A549 (cell line): ENCODE measurements at regions of chr17 and their contacts with region 1.

Region 1: DNA sequence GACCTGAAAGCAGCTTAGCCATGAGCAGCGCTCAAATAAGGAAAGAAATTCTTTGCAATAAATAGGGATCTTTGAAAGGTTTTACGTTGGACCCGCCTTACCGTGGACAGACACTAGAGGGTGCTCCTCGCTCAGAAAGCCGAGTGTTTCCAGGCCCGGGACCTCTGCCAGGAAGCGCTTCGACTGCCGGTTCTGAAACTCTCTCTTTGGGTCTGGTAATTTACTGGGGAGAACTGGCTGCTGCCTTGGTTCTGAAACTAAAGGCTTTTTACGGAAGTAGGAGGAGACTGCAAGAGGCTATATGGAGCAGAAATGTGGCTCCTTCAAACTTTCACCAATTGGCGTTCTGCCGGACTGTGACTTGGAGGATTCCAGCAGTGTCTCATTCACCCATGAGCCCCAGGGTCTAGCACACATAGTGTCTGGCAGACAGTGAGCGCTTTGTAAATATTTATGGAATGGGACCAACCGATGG is 45.6 kb upstream of the HOXB9 start:
- DNase-seq: peak; percentile 72 to 79
- ATAC-seq: peak; percentile 81 to 86
- H3K4me3 ChIP-seq: peak overlapping the region; percentile 10; the same call in 2 of the 3 replicates
- H3K27ac ChIP-seq: peak overlapping the region; percentile 29 to 69
- H3K4me1 ChIP-seq: peaks cover 3% of the 10 kb centered on the region; the same call in 1 of the 3 replicates
- CTCF ChIP-seq: peak; percentile 91
- EP300 ChIP-seq: no peak
- POLR2A ChIP-seq: no peak
- RAD21 ChIP-seq: peak; percentile 90 to 93

Region 2: GRCh38 chr17:48500966-48501426 is 170.7 kb before region 1 on chr17:
- CTCF ChIA-PET with region 1: no interaction called
- POLR2A ChIA-PET with region 1: no interaction called
- DNase-seq: peak in 1 of 2 experiments; percentile 53
- ATAC-seq: peak; percentile 40 to 76; a peak in 4 of 6 replicates
- H3K4me3 ChIP-seq: no peak overlapping the region
- H3K27ac ChIP-seq: 0 out of 6 replicates have a peak overlapping the region, but pooled peaks of 1 of the 2 experiments have one; percentile 2
- H3K4me1 ChIP-seq: peaks cover 25% of the 10 kb centered on the region
- CTCF ChIP-seq: no peak; the same call in 2 of the 3 replicates
- EP300 ChIP-seq: no peak
- POLR2A ChIP-seq: no peak
- RAD21 ChIP-seq: peak; percentile 32 to 53; a peak in 3 of 5 replicates

Region 3: DNA sequence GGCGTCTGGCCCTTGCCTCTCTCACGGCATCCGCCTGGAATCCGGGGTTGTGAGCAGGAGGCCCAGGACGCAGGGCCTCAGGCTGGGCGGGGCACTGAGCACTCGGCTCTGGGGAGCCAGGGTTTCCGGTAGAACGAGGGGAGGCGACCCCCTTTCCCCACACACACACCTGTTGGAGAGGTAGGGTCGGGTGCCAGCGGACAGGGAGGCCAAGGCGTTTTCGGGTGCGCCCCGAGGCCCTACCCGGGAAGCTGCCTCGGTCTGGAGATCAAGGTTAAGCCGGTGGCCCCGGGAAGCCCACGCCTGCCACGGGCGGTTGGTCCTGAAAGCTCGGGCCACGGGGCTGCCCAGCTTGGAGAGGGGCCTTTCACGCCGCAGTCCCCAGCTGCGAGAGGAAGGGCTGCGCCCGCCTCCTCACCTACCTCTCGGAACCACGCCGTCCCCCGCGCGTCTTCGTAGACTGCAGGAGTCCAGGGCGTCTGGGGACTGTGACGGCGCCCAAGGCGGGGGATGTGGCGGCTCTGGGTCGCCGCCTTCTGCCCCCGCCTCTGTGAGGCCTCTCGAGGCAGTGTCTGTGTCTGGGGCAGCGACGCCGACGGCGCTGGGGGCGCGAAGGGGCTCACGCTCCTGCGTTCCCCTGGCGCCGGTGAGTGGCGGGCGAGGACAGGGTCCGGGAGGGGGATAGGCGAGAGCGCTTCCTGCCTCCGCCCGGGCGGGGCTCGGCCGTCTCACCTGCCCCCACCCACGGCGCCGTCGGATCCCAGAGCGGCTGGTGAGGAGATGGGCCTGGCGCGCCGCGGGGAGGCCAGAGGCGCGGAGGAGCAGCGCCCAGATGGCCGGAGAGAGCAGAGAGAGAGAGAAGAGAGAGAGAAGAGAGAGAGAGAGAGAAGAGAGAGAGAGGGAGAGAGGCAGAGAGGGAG is 25.3 kb before region 1 on chr17:
- CTCF ChIA-PET with region 1: interaction called, 17 read pairs
- POLR2A ChIA-PET with region 1: no interaction called
- DNase-seq: peak; percentile 64 to 80
- ATAC-seq: peak; percentile 76 to 79
- H3K4me3 ChIP-seq: peak overlapping the region; percentile 74
- H3K27ac ChIP-seq: peak overlapping the region; percentile 92 to 95
- H3K4me1 ChIP-seq: peaks cover 34% of the 10 kb centered on the region
- CTCF ChIP-seq: no peak
- EP300 ChIP-seq: no peak
- POLR2A ChIP-seq: peak; percentile 35
- RAD21 ChIP-seq: no peak

Region 4: DNA sequence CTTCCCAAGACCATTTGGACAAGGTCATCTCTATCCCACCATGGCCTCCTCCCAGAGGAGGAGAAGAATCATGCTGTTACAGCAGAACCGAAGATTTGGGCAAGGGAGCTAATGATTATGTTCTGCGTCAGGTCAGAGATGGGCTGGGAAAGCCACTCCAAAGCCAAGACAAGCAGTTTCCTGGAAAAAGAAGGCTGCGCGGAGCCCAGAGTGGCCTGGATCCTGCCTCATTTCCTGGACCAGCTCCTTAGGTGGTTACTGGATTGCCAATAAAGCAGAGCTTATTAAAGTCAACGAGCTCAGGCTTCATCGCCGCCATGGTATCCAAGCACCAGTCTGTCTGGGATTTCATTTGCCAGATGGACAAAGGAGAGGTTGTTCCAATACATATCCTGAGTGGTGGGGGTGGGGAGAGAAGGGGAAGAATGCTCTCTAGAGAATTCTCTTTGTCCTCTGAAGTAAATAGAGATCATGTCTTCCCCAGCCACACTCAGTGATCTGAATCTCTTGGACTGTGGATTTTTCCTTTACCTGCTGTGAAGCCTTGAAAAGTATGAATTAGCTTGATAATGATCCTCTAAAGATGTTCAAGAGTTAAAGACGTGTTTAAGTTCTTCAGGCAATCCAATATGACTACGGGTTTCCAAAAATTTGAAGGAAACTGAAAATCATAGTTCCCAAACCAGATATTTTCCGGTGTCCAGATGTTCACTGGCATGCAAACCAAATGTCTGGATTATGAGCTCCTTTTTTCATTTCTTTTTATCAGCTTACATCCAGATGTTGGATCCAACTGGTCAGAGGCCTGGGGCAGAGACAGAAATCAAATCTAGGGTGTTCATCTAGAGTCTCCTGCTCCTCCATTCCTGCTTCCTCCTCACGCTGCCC is 32.9 kb after region 1 on chr17:
- CTCF ChIA-PET with region 1: interaction called, 70 read pairs
- POLR2A ChIA-PET with region 1: no interaction called
- DNase-seq: no peak
- ATAC-seq: no peak
- H3K4me3 ChIP-seq: no peak overlapping the region
- H3K27ac ChIP-seq: no peak overlapping the region
- H3K4me1 ChIP-seq: no peaks in the 10 kb centered on the region
- CTCF ChIP-seq: no peak
- EP300 ChIP-seq: no peak
- POLR2A ChIP-seq: no peak
- RAD21 ChIP-seq: no peak

Region 5: DNA sequence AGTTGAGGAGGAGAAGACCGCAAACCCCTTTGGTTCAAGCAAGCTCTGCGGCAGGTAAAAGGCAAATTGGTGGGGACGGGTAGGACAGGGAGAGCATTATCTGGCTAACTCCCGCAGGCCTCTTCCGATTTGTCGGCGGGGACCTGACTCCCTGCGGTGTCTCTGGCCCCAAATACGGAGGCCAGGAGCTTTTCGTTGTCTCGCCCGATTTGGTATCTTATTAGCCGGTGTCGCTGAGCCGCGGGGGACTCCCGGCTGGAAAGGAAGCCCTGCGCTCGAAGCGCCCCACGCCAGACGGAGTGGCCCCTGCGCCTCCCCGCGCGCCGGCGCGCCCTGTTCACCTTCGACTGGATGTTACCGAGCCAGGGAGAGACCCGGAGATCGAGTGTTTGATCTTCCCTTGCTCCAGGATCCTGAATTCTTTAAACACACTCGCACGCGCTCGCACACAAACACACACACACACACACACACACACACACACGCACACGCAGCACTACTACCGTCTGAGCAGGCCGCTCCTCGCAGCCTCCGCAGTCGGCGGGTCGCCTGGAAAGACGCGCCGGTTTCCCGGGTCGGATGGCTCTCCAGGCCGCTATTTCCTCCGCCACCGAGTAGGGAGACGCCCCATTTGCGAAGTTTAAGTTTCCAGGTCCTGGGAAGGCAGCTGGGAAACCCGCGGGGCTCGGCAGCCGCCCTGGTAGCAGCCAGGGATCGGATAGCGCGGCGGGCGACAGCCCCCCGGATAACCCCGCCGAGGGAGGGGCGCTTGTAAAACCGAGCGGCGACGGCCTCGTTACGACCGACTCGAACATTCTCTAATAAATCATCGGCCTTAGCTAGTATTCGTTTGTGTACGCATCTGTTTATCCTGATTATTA is 47.3 kb after region 1 on chr17:
- CTCF ChIA-PET with region 1: interaction called, 204 read pairs
- POLR2A ChIA-PET with region 1: no interaction called
- DNase-seq: no peak
- ATAC-seq: no peak
- H3K4me3 ChIP-seq: no peak overlapping the region
- H3K27ac ChIP-seq: no peak overlapping the region
- H3K4me1 ChIP-seq: peaks cover 10% of the 10 kb centered on the region; the same call in 2 of the 3 replicates
- CTCF ChIP-seq: no peak
- EP300 ChIP-seq: no peak
- POLR2A ChIP-seq: no peak
- RAD21 ChIP-seq: no peak

Region 6: DNA sequence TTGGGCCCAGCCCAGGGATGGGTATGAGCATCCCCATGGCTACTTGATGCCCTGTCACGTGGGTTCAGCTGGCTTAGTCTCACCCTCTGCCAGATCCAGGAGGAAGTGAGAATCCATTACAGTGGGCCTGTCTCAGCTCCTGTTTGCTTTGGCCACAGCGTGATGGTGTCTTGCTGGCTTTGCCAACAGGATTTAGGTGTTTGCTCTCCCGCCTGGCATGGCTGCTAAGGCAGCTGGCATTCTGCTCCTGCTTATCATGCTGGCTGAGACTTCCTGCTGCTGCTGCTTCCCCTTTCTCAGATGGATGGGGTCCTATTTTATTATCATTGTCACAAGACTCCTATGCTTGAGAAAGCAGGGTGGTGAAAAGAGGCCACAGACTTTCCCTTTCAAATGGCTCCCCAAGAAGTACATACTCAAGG is 85.1 kb after region 1 on chr17:
- CTCF ChIA-PET with region 1: interaction called, 13 read pairs
- POLR2A ChIA-PET with region 1: no interaction called
- DNase-seq: no peak
- ATAC-seq: no peak
- H3K4me3 ChIP-seq: no peak overlapping the region
- H3K27ac ChIP-seq: no peak overlapping the region
- H3K4me1 ChIP-seq: peaks cover 40% of the 10 kb centered on the region
- CTCF ChIP-seq: no peak
- EP300 ChIP-seq: no peak
- POLR2A ChIP-seq: no peak
- RAD21 ChIP-seq: no peak